ENCODE measurements at regions of chr14 and their contacts with region 1.

Region 1: DNA sequence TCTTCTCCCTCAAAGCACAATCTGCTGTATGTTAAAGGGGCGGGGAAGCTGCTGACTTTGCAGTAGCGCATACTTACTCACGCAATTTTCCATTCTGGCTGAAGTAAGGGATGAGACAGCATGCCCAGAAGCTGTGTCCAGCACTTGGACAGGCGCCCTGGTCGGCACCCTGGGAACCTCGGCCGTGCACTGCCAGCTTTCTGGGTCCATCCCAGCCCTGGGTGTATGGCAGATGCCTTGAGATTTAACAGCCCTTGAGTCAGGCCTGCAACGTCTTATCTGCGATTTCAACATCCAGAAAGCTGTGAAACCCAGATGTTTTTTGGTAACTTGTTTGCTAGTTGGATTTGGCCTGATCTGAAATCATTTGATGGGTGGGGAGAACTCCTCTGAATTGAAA is 16.1 kb downstream of the EML1 start:
- DNase-seq: no peak
- ATAC-seq: no peak
- H3K4me3 ChIP-seq: no peak overlapping the region
- H3K27ac ChIP-seq: no peak overlapping the region
- H3K4me1 ChIP-seq: no peaks in the 10 kb centered on the region
- CTCF ChIP-seq: no peak
- EP300 ChIP-seq: no peak
- POLR2A ChIP-seq: no peak
- RAD21 ChIP-seq: no peak

Region 2: DNA sequence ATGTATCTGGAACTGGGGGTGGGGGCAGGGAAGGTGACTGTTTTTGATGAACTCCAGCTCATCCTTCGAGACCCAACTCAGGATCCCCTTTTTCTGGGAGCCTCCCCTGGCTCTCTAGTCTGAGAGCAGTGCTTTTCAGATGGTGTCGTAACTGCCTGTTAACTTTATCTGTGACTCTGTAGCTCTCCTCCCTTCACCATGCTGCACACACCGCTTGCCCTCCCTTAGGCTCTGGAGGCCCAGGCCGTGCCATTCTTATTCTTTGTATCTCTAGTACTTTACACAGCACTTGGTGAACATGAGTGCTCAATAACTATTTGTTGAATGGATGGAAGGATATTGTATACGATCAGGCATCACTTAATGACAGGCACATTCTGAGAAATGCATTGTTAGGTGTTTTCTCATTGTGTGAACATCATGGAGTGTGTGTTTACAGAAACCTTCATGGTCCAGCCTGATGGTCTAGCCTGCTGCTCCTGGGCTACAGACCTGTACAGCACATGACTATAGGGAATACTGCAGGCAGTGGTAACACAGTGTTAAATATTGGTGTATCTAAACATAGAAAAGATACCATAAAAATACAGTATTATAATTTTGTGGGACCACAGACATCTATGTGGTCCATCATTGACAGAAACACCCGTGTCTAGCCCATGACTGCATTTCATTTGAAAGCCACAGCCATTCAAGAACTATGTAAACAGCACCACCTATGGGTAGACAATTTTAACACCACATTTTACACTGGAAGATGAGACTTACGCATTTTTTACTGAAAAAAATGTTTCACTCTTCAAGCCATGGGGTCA is 75.7 kb after region 1 on chr14:
- CTCF ChIA-PET with region 1: interaction called, 11 read pairs
- POLR2A ChIA-PET with region 1: no interaction called
- DNase-seq: peak; percentile 69 to 71
- ATAC-seq: peak; percentile 75 to 92; a peak in 4 of 6 replicates
- H3K4me3 ChIP-seq: no peak overlapping the region
- H3K27ac ChIP-seq: no peak overlapping the region
- H3K4me1 ChIP-seq: no peaks in the 10 kb centered on the region
- CTCF ChIP-seq: peak; percentile 95
- EP300 ChIP-seq: no peak
- POLR2A ChIP-seq: no peak
- RAD21 ChIP-seq: peak; percentile 91 to 94

Region 3: GRCh38 chr14:100015251-100015655 is 205.9 kb after region 1 on chr14:
- CTCF ChIA-PET with region 1: no interaction called
- POLR2A ChIA-PET with region 1: no interaction called
- DNase-seq: no peak
- ATAC-seq: no peak
- H3K4me3 ChIP-seq: no peak overlapping the region
- H3K27ac ChIP-seq: no peak overlapping the region
- H3K4me1 ChIP-seq: peaks cover 31% of the 10 kb centered on the region
- CTCF ChIP-seq: no peak
- EP300 ChIP-seq: no peak
- POLR2A ChIP-seq: no peak
- RAD21 ChIP-seq: no peak

Region 4: GRCh38 chr14:100192672-100193416 is 383.5 kb after region 1 on chr14:
- CTCF ChIA-PET with region 1: no interaction called
- POLR2A ChIA-PET with region 1: no interaction called
- DNase-seq: peak; percentile 99
- ATAC-seq: peak; percentile 99 to 100
- H3K4me3 ChIP-seq: peak overlapping the region; percentile 33
- H3K27ac ChIP-seq: peak overlapping the region; percentile 85 to 92
- H3K4me1 ChIP-seq: peaks cover 15% of the 10 kb centered on the region
- CTCF ChIP-seq: peak; percentile 84
- EP300 ChIP-seq: no peak
- POLR2A ChIP-seq: peak; percentile 39
- RAD21 ChIP-seq: peak; percentile 83 to 94